Gastrocnemius medialis (tissue), 4 donors: ENCODE measurements at regions of chr5 and their contacts with region 1.

Region 1: DNA sequence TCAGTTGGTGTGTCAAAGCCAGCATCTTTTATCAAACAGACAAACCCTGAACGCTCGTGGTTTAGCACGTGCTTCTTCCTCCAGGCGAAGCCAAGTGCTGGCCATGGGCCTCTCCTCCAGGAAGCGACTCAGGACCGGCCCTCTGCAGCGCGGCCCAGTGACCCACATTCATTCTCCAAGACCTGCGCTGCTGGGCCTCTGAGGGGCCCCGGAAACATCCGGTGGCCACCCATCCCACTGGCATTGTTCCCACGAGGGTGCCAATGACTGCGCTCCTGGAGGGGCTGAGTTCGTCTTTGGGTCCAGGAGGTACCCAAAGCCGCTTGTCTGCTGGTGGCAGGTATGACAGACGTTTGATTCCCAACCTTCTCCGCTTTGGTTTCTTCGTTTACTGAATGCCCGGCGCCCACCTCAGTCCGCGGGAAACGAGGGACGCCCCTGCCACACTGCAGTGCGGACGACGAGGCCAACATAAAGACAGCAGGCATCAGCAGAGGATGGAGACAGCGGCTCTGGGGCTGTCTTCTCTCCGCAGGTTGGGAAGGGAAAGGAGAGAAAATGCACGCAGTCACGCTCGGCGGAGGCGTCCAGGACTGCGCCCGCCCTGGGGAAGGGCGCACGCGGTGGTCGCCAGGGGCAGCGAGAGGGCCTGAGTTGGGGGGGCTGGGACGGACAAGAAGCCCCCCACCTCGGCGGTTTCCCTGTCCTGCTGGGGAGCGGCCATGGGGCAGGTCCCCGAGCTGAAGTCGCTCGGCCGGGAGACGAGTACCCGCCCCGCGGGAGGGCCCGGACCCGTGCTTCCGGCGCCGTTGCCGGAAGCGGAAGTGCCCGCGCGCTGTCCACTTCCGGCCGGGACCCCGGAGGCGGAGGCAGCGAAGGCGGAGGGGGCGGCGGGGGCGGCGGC is at the start of gene EXOC3:
- DNase-seq: peak; percentile 43 to 52
- ATAC-seq: peak; percentile 88 to 93
- H3K4me3 ChIP-seq: peak within 1 kb of the TSS; percentile 92 to 100 (median 97)
- H3K27ac ChIP-seq: peak within 1 kb of the TSS; percentile 88 to 93 (median 90)
- H3K4me1 ChIP-seq: peaks cover 18 to 22% of the 10 kb centered on the region in 2 donors
- H3K27me3 ChIP-seq: peaks cover 0 to 2% (median 0%) of the 10 kb centered on the region in 3 donors
- CTCF ChIP-seq: no peak
- POLR2A ChIP-seq: peak; percentile 67 to 77
- total RNA-seq, gene EXOC3: 44.3 to 81.7 (median 54.0) TPM

Region 2: DNA sequence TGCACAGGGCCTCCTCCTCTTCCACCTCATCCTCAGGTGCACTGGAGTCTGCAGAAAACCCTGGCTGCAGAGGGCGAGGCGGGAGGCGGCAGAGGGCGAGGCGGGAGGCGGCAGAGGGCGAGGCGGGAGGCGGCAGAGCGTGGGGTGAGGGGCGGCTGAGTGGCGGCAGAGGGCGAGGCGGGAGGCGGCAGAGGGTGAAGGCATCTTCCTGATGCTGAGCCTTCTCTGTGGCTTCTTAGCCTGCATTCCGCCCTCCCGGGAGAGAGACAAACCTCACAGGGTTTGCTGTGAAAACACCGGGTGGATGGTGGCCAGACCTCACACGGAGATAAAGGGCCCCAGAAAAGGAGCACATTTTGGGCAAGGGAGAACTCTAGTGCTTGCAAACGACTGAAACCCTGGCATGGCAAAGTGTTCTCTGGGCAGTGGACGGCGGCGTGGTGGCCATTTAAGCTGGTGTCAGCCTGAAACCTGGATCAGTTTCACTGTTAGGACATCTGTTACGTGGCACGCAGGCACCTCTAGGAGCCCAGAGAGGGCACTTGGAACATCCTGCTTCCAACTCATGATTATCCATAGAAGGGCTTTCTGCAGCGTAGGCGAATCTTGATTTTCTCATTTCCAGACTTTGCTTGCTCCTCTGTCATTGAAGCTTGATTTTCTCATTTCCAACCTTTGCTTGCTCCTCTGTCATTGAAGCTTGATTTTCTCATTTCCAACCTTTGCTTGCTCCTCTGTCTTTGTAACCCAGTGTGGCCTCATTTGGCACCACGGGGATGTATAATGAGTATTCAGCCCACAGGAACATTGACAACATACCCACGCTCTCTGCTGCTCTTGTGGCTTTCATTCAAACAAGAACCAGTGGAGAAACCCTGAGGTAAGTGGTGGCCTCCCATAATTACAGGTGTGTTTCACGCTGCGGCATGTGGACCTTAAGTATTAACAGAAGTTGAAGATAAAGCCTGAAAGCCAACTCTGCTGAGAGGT is 367.0 kb before region 1 on chr5:
- in situ Hi-C with region 1: no loop called
- intact Hi-C with region 1: no loop called
- DNase-seq: no peak
- ATAC-seq: no peak
- H3K4me3 ChIP-seq: no peak overlapping the region
- H3K27ac ChIP-seq: no peak overlapping the region
- H3K4me1 ChIP-seq: no peaks in the 10 kb centered on the region
- H3K27me3 ChIP-seq: peaks cover 0 to 5% (median 0%) of the 10 kb centered on the region in 3 donors
- CTCF ChIP-seq: no peak
- POLR2A ChIP-seq: no peak

Region 3: GRCh38 chr5:270340-270739 is 172.2 kb before region 1 on chr5:
- in situ Hi-C with region 1: no loop called
- intact Hi-C with region 1: loop called (anchors 10 kb)
- DNase-seq: no peak
- ATAC-seq: no peak
- H3K4me3 ChIP-seq: peak overlapping the region in 1 of 4 donors; percentile 69
- H3K27ac ChIP-seq: peak overlapping the region in 3 of 4 donors; percentile 79 to 92 (median 90)
- H3K4me1 ChIP-seq: peaks cover 5 to 10% of the 10 kb centered on the region in 2 donors
- H3K27me3 ChIP-seq: no peaks in the 10 kb centered on the region
- CTCF ChIP-seq: no peak
- POLR2A ChIP-seq: no peak

Region 4: GRCh38 chr5:472656-473553 is 30.3 kb after region 1 on chr5:
- in situ Hi-C with region 1: no loop called
- intact Hi-C with region 1: loop called (anchors 2 kb)
- DNase-seq: peak; percentile 70 to 80
- ATAC-seq: peak; percentile 85 to 88
- H3K4me3 ChIP-seq: peak overlapping the region; percentile 74 to 99 (median 92)
- H3K27ac ChIP-seq: peak overlapping the region; percentile 84 to 94 (median 90)
- H3K4me1 ChIP-seq: peaks cover 11 to 24% of the 10 kb centered on the region in 2 donors
- H3K27me3 ChIP-seq: peaks cover 28 to 34% (median 32%) of the 10 kb centered on the region in 3 donors
- CTCF ChIP-seq: peak in 1 of 5 experiments; percentile 13
- POLR2A ChIP-seq: peak; percentile 67 to 69

Region 5: GRCh38 chr5:502325-503079 is 59.9 kb after region 1 on chr5:
- in situ Hi-C with region 1: no loop called
- intact Hi-C with region 1: no loop called
- DNase-seq: no peak
- ATAC-seq: no peak
- H3K4me3 ChIP-seq: no peak overlapping the region
- H3K27ac ChIP-seq: no peak overlapping the region
- H3K4me1 ChIP-seq: no peaks in the 10 kb centered on the region
- H3K27me3 ChIP-seq: peaks cover 21 to 46% (median 40%) of the 10 kb centered on the region in 3 donors
- CTCF ChIP-seq: no peak
- POLR2A ChIP-seq: no peak

Region 6: GRCh38 chr5:611721-612486 is 169.3 kb after region 1 on chr5 and contains the start of gene CEP72:
- in situ Hi-C with region 1: no loop called
- intact Hi-C with region 1: loop called (anchors 10 kb)
- DNase-seq: peak; percentile 78 to 82
- ATAC-seq: peak; percentile 95 to 96
- H3K4me3 ChIP-seq: peak within 1 kb of the TSS; percentile 70 to 78 (median 74)
- H3K27ac ChIP-seq: peak within 1 kb of the TSS in 2 of 4 donors; percentile 28 to 41
- H3K4me1 ChIP-seq: peaks cover 6 to 13% of the 10 kb centered on the region in 2 donors
- H3K27me3 ChIP-seq: peaks cover 0 to 2% (median 0%) of the 10 kb centered on the region in 3 donors
- CTCF ChIP-seq: no peak
- POLR2A ChIP-seq: no peak
- total RNA-seq, gene CEP72: 0.36 to 0.56 (median 0.40) TPM in 3 of 4 donors, not detected in the other

Region 7: DNA sequence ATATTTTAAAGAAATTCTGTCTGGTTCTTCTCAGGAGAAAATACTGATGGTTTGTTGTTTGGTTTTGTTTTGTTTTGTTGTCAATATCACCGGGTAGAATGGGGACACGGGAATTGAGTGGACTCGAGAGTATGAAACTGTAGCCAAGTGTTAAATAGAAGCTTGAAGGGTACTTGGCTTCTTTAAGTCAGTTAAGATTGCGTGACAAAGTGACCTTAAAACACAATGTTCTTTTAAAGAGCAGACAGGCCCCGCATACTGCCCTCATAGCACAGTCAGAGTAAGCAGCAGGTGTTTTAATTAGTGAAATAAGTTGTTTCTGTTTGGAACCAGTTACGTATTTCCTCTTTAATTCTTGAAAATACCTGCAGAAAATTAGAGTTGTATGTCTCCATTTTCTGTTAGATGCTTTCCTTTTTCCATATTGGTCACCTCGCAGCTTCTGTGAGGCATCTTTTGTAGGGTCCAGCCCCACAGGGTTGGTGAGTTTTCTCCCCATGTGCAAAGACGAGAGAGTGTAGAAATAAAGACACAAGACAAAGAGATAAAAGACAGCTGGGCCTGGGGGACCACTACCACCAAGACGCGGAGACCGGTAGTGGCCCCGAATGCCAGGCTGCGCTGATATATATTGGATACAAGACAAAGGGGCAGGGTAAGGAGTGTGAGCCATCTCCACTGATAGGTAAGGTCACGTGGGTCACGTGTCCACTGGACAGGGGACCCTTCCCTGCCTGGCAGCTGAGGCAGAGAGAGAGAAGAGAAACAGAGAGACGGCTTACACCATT is 459.7 kb after region 1 on chr5:
- in situ Hi-C with region 1: no loop called
- intact Hi-C with region 1: loop called (anchors 10 kb)
- DNase-seq: peak in 1 of 2 donors; percentile 8
- ATAC-seq: no peak
- H3K4me3 ChIP-seq: no peak overlapping the region
- H3K27ac ChIP-seq: no peak overlapping the region
- H3K4me1 ChIP-seq: peaks cover 0 to 4% of the 10 kb centered on the region in 2 donors
- H3K27me3 ChIP-seq: no peaks in the 10 kb centered on the region
- CTCF ChIP-seq: no peak
- POLR2A ChIP-seq: no peak